Mammary epithelial cell (primary cell): ENCODE measurements at regions of chr14 and their contacts with region 1.

Region 1: DNA sequence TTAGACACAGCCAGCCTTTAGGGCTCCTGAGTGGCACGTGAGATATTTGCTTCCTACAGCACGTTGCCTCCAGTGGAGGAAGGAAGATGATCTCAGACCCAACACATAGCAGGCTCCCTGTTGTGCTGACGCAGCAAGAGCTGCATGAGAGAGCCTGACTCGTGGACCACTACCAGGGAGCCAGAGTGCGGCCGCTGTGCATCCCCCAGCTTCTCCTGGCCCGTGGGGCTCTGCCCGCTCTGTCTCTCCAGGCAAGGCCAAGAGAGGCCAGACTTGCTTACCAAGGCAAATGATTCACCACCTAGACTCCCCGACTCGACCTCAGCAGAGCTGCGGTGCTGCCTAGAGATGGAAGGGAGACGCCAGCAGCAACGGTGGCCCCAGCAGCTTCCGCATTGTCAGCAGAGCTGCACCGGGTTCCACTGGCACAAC is 37.5 kb downstream of the MAP3K9 start:
- DNase-seq: no peak
- H3K4me3 ChIP-seq: no peak overlapping the region
- H3K27ac ChIP-seq: peak overlapping the region; percentile 66
- H3K4me1 ChIP-seq: peaks cover 29% of the 10 kb centered on the region
- H3K27me3 ChIP-seq: no peaks in the 10 kb centered on the region
- CTCF ChIP-seq: no peak

Region 2: DNA sequence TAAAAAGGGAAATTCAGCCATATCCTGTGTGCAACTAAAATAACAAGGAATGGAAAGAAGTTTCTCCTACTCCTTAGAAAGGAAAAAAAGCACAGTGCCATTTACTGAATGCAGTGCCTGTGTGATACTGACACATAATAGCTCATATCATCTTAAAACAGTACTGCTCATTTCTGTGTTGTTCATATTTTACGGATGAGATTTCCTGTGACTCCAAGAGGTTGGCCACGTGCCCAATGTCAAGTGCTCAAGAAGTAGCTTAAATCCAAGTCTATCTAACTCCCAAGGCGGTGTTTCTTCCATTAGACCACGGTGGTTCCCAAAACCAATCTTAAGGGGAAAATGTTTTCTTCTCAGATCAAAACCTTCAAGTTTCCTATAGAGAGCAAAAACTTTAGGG is 17.6 kb after region 1 on chr14:
- CTCF ChIA-PET with region 1: no interaction called
- dilution Hi-C with region 1: no loop called
- in situ Hi-C with region 1: no loop called
- intact Hi-C with region 1: loop called (anchors 2 kb)
- DNase-seq: peak; percentile 74
- H3K4me3 ChIP-seq: no peak overlapping the region
- H3K27ac ChIP-seq: peak overlapping the region; percentile 45
- H3K4me1 ChIP-seq: peaks cover 61% of the 10 kb centered on the region
- H3K27me3 ChIP-seq: no peaks in the 10 kb centered on the region
- CTCF ChIP-seq: no peak

Region 3: GRCh38 chr14:70934502-70935134 is 162.8 kb after region 1 on chr14:
- CTCF ChIA-PET with region 1: no interaction called
- dilution Hi-C with region 1: no loop called
- in situ Hi-C with region 1: no loop called
- intact Hi-C with region 1: no loop called
- DNase-seq: peak; percentile 45
- H3K4me3 ChIP-seq: no peak overlapping the region
- H3K27ac ChIP-seq: no peak overlapping the region
- H3K4me1 ChIP-seq: peaks cover 15% of the 10 kb centered on the region
- H3K27me3 ChIP-seq: no peaks in the 10 kb centered on the region
- CTCF ChIP-seq: no peak